AG04450 (cell line): ENCODE measurements at regions of chr1 and their contacts with region 1.

Region 1: DNA sequence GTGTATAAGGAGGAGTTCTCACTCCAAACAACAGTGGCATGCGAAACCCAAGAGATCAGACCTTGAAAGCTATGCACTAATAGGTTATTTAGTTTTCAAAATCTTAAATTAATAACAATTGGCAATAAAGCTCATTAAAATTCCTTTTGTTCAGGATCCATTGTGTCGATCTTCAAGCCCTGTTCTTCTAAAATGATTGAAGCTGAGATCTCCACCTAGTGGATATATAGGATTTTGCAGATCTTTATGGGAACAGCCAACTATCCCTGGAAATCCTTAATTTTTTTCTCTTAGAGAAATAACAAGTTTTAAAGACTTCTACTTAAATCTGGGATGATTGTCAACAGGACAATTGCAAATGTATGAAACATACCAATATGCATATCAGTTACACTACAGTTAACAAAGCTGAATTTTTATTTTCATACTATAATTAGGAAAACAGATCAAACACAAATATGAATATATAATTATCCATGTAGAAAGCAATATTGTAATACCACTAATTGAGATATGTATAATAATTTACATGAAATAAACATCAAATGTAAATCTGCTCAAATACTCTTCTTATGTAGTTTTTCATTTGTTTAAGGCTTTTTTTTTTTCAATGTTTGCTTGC is 43.3 kb downstream of the LRRC53 start:
- DNase-seq: peak; percentile 26
- H3K4me3 ChIP-seq: no peak overlapping the region
- H3K27ac ChIP-seq: no peak overlapping the region
- H3K27me3 ChIP-seq: no peaks in the 10 kb centered on the region
- CTCF ChIP-seq: peak; percentile 71

Region 2: GRCh38 chr1:73980324-73981040 is 488.6 kb before region 1 on chr1:
- CTCF ChIA-PET with region 1: no interaction called
- POLR2A ChIA-PET with region 1: no interaction called
- DNase-seq: no peak
- H3K4me3 ChIP-seq: no peak overlapping the region
- H3K27ac ChIP-seq: no peak overlapping the region
- H3K27me3 ChIP-seq: no peaks in the 10 kb centered on the region
- CTCF ChIP-seq: no peak

Region 3: DNA sequence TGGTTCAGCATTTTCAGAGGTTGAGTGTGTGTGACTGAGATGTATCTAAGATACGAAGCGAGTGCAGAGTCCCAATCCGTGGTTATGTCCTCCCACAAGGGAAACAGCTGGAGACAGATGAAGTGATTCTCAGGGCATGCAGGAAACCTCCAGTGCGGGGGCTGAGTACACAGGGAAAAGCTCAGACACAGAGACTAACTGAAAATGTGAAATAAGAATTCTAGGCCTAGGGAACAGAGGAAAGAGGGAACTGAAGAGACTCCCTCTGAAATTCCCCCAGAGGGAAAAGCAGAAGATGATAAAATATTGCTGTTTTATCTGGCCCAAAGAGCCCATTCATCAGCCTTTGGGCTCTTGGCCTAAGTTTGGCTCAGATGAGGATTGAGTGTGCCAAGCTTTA is 73.5 kb before region 1 on chr1:
- CTCF ChIA-PET with region 1: interaction called, 12 read pairs
- POLR2A ChIA-PET with region 1: no interaction called
- DNase-seq: peak; percentile 18
- H3K4me3 ChIP-seq: no peak overlapping the region
- H3K27ac ChIP-seq: peak overlapping the region; percentile 13
- H3K27me3 ChIP-seq: no peaks in the 10 kb centered on the region
- CTCF ChIP-seq: no peak

Region 4: GRCh38 chr1:74437035-74437434 is 32.1 kb before region 1 on chr1:
- CTCF ChIA-PET with region 1: interaction called, 10 read pairs
- POLR2A ChIA-PET with region 1: no interaction called
- DNase-seq: no peak
- H3K4me3 ChIP-seq: no peak overlapping the region
- H3K27ac ChIP-seq: no peak overlapping the region
- H3K27me3 ChIP-seq: no peaks in the 10 kb centered on the region
- CTCF ChIP-seq: no peak

Region 5: GRCh38 chr1:74480068-74480467 is 11.0 kb after region 1 on chr1:
- CTCF ChIA-PET with region 1: interaction called, 13 read pairs
- POLR2A ChIA-PET with region 1: no interaction called
- DNase-seq: no peak
- H3K4me3 ChIP-seq: no peak overlapping the region
- H3K27ac ChIP-seq: no peak overlapping the region
- H3K27me3 ChIP-seq: no peaks in the 10 kb centered on the region
- CTCF ChIP-seq: no peak

Region 6: GRCh38 chr1:74689621-74690363 is 220.7 kb after region 1 on chr1:
- CTCF ChIA-PET with region 1: interaction called, 30 read pairs
- POLR2A ChIA-PET with region 1: no interaction called
- DNase-seq: peak; percentile 24
- H3K4me3 ChIP-seq: no peak overlapping the region
- H3K27ac ChIP-seq: no peak overlapping the region
- H3K27me3 ChIP-seq: no peaks in the 10 kb centered on the region
- CTCF ChIP-seq: peak; percentile 84